ENCODE measurements at regions of chr20 and their contacts with region 1.

Region 1: DNA sequence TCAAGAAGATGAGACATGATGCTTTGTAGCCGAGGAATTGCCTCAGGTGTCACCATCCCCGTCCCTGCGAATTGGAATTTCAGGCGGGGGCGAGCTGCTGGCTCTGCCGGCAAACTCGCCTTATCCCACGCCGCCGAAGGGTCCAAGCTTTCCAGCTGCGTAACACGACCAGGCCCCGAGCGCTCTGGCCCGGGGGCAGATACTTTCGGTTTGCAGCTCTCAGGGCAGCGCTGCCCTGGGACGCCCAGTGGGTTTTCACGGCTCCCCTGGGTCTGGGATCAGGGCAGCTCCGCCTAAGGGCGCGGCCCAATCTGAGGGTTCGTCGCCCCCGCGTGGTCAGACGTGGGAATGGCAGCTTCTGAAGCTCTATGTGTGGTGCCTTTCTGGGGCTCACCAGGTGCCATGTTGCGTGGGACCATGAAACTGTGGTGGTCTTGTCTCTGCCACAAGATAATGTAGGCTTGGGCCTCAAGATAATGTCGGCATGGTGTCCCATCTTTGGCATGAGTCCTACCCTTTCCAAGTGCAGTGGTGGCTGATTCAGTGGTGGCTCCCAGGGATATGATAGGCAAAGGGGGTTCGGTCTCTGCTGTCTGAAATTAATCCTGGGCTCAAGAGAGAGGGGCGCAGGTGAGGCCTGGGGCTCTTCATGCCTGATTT is 20.9 kb downstream of the PIGT start:
- DNase-seq: peak; percentile 87
- H3K4me3 Mint-ChIP-seq: peak overlapping the region; percentile 77
- H3K27ac Mint-ChIP-seq: no peak overlapping the region
- H3K4me1 Mint-ChIP-seq: peaks cover 26% of the 10 kb centered on the region
- H3K27me3 Mint-ChIP-seq: no peaks in the 10 kb centered on the region

Region 2: GRCh38 chr20:45293041-45294002 is 143.5 kb before region 1 on chr20:
- CTCF ChIA-PET with region 1: interaction called, 20 read pairs
- POLR2A ChIA-PET with region 1: no interaction called
- DNase-seq: peak; percentile 84
- H3K4me3 Mint-ChIP-seq: peak overlapping the region; percentile 64
- H3K27ac Mint-ChIP-seq: no peak overlapping the region
- H3K4me1 Mint-ChIP-seq: peaks cover 10% of the 10 kb centered on the region
- H3K27me3 Mint-ChIP-seq: peaks cover 39% of the 10 kb centered on the region

Region 3: DNA sequence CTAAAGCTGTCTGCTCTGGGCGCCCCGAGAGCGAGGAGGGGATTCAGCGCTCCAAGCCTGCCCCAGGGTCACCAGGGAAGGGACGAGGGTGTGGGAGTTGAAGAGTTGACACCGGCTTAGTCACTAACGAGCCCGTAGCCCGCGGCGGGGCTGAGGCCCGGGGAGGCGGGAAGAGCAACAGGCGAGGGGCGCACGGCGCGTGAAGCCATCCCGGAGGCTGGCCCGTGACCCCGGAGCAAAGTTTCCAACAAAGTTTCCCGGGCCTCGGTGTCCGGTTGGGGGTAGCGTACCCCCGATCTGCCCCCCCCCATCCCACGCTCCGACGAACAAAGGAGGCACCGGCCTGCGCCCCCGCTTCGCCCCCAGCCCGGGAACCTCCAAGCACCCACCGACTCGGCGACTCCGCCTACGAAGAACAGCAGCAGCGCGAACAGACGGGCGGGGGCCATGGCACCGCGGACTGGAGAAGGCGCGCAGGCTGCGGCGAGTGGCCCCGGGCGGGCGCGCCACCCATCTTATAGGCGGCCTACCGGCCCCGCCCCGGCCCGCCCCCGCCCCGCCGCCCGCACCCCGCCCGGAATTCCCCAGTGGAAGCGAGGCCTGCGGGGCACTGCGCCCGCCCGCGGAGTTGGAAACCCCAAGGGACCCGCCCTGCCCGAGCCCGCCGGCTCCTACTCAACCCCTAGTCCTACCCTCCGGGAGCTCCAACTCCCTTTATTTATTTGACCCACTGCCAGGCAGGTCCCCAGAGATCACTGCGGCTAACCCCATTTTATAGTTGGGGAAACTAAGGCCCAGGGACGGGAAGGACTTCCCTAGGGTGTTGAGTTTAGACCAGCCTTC is 88.7 kb before region 1 on chr20 and contains the start of gene SDC4:
- CTCF ChIA-PET with region 1: interaction called, 12 read pairs
- POLR2A ChIA-PET with region 1: interaction called, 4 read pairs
- DNase-seq: peak; percentile 70
- H3K4me3 Mint-ChIP-seq: peak within 1 kb of the TSS; percentile 86
- H3K27ac Mint-ChIP-seq: peak within 1 kb of the TSS; percentile 67
- H3K4me1 Mint-ChIP-seq: peaks cover 48% of the 10 kb centered on the region
- H3K27me3 Mint-ChIP-seq: no peaks in the 10 kb centered on the region
- total RNA-seq, gene SDC4: 28.1 to 28.3 TPM

Region 4: DNA sequence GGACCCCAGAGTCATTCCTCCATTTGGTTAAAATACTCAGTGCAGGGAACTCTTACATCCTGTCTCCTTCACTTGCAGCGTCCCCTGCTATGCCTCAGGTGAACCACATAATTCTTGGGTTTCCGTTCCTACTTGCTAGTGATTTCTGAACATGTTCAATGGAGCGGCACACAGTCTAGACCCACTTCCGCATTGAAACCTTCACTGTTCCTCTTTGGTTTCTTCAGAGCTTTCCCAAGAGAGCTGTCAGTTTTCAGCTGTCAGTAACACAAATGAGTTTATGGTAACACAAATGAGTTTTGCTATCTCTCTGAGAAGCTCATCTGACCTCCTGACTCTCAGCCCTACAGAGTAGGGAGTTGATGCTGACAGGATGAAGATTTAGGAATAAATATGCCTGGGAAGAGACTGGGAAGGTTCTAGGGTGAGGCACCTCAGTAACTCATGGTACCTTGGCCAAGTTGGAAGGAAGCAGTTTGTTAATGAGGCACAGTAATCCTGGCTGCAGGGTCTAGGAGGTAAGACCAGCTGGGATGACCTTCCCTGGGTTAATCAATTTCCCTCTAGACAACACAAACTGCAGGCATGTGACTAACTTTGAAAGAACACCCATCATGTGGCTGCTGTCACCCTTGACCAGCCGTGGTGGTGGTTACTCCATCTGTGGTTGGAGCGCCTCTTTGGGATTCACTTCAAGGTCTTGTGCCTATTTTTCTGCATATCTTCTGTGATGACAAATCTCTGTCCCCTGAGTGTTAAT is 68.5 kb before region 1 on chr20:
- CTCF ChIA-PET with region 1: interaction called, 194 read pairs
- POLR2A ChIA-PET with region 1: interaction called, 30 read pairs
- DNase-seq: peak; percentile 61
- H3K4me3 Mint-ChIP-seq: peak overlapping the region; percentile 30
- H3K27ac Mint-ChIP-seq: peak overlapping the region; percentile 67
- H3K4me1 Mint-ChIP-seq: peaks cover 63% of the 10 kb centered on the region
- H3K27me3 Mint-ChIP-seq: no peaks in the 10 kb centered on the region

Region 5: DNA sequence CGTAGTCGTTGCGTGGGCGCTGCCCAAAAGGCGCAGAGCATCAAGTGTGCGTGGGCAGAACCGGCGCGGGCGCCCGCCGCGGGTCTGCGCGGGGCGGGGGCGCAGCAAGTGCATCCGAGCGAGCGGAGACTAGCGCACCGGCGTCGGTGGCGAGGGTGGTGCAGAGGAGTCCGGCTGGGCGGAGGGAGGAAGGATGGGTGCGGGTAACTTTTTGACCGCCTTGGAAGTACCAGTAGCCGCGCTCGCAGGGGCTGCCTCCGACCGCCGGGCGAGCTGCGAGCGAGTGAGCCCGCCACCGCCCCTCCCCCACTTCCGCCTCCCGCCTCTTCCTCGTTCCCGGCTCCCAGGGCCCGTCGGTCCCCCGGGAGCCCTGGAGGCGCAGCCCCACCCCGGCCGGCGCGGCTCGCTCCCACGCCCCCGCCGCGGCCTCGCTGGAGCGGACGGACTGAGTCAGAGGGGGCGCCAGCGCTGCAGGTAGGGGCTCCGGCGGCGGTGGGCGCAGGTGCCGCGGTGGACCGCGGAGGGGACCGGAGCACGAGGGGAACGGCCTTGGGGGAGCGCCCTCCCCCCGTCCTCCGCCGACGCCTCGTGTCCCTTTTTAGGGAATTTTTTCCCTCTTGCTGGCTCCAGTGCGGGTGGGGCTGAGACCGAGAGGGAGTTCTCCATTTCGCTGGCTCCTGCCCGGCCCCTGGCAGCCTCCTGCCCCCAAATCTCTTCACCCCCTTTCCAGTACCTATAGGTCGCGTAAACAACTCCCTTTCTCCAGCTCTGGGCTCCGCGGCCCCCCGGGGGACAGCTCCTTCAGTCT is 30.4 kb before region 1 on chr20:
- CTCF ChIA-PET with region 1: interaction called, 10 read pairs
- POLR2A ChIA-PET with region 1: interaction called, 3 read pairs
- DNase-seq: peak; percentile 45
- H3K4me3 Mint-ChIP-seq: peak overlapping the region; percentile 71
- H3K27ac Mint-ChIP-seq: no peak overlapping the region
- H3K4me1 Mint-ChIP-seq: peaks cover 16% of the 10 kb centered on the region
- H3K27me3 Mint-ChIP-seq: peaks cover 22% of the 10 kb centered on the region

Region 6: GRCh38 chr20:45450097-45450818 is 13.4 kb after region 1 on chr20:
- CTCF ChIA-PET with region 1: interaction called, 32 read pairs
- POLR2A ChIA-PET with region 1: no interaction called
- DNase-seq: no peak
- H3K4me3 Mint-ChIP-seq: no peak overlapping the region
- H3K27ac Mint-ChIP-seq: no peak overlapping the region
- H3K4me1 Mint-ChIP-seq: peaks cover 10% of the 10 kb centered on the region
- H3K27me3 Mint-ChIP-seq: peaks cover 4% of the 10 kb centered on the region

Measured in activated CD4-positive, alpha-beta memory T cell treated with anti-CD3 and anti-CD28 coated beads, Interleukin-2, amount 10 ng/mL, durations not matched to agents 7 days and 5 days (primary cell).